SK-N-SH (cell line): ENCODE measurements at regions of chr1 and their contacts with region 1.

Region 1: GRCh38 chr1:50697440-50698421 is 262.3 kb downstream of the FAF1 start:
- DNase-seq: no peak
- H3K4me3 ChIP-seq: no peak overlapping the region
- H3K27ac ChIP-seq: no peak overlapping the region
- H3K4me1 ChIP-seq: peaks cover 0 to 2% of the 10 kb centered on the region in 2 experiments; a peak in 1 of 4 replicates
- H3K27me3 ChIP-seq: no peaks in the 10 kb centered on the region
- CTCF ChIP-seq: no peak
- EP300 ChIP-seq: no peak
- RAD21 ChIP-seq: no peak

Region 2: GRCh38 chr1:50368179-50369012 is 329.3 kb before region 1 on chr1:
- CTCF ChIA-PET with region 1: interaction called, 39 read pairs
- POLR2A ChIA-PET with region 1: no interaction called
- DNase-seq: peak; percentile 80
- H3K4me3 ChIP-seq: peak overlapping the region in 1 of 2 experiments; percentile 53; a peak in 1 of 4 replicates
- H3K27ac ChIP-seq: no peak overlapping the region
- H3K4me1 ChIP-seq: no peaks in the 10 kb centered on the region; a peak in 1 of 4 replicates
- H3K27me3 ChIP-seq: no peaks in the 10 kb centered on the region
- CTCF ChIP-seq: peak; percentile 90
- EP300 ChIP-seq: no peak
- RAD21 ChIP-seq: peak; percentile 91